Activated CD8-positive, alpha-beta T cell treated with anti-CD3 and anti-CD28 coated beads, Interleukin-2, amount 10 ng/mL, durations not matched to agents 7 days and 5 days (primary cell): ENCODE measurements at regions of chr2 and their contacts with region 1.

Region 1: GRCh38 chr2:18402-19271 is 27.7 kb downstream of the FAM110C start:
- DNase-seq: no peak
- ATAC-seq: no peak
- H3K4me3 Mint-ChIP-seq: no peak overlapping the region
- H3K27ac Mint-ChIP-seq: no peak overlapping the region
- H3K4me1 Mint-ChIP-seq: no peaks in the 10 kb centered on the region
- H3K27me3 Mint-ChIP-seq: peaks cover 20% of the 10 kb centered on the region

Region 2: DNA sequence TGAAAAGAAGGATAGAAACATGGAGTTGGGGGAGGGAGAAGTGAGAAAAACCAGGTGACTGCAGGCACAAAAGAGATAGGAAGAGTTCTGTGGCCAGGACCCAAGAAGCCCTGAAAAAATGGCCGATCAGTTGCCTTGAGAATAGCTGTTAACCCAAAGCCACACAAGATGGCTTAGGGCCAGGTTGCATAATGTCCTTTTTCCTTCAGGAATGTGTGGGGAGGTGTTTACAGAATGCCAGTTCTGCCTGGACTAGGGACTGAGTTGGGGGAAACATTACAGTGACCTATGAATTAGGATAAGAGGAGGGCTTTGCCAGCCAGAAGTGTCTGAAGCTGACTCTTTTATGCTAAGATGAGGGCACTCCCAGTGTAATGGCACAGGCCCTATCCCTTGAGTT is 10.6 kb after region 1 on chr2:
- CTCF ChIA-PET with region 1: interaction called, 23 read pairs
- POLR2A ChIA-PET with region 1: no interaction called
- DNase-seq: no peak
- ATAC-seq: no peak
- H3K4me3 Mint-ChIP-seq: no peak overlapping the region
- H3K27ac Mint-ChIP-seq: peak overlapping the region; percentile 78
- H3K4me1 Mint-ChIP-seq: peaks cover 59% of the 10 kb centered on the region
- H3K27me3 Mint-ChIP-seq: no peaks in the 10 kb centered on the region

Region 3: DNA sequence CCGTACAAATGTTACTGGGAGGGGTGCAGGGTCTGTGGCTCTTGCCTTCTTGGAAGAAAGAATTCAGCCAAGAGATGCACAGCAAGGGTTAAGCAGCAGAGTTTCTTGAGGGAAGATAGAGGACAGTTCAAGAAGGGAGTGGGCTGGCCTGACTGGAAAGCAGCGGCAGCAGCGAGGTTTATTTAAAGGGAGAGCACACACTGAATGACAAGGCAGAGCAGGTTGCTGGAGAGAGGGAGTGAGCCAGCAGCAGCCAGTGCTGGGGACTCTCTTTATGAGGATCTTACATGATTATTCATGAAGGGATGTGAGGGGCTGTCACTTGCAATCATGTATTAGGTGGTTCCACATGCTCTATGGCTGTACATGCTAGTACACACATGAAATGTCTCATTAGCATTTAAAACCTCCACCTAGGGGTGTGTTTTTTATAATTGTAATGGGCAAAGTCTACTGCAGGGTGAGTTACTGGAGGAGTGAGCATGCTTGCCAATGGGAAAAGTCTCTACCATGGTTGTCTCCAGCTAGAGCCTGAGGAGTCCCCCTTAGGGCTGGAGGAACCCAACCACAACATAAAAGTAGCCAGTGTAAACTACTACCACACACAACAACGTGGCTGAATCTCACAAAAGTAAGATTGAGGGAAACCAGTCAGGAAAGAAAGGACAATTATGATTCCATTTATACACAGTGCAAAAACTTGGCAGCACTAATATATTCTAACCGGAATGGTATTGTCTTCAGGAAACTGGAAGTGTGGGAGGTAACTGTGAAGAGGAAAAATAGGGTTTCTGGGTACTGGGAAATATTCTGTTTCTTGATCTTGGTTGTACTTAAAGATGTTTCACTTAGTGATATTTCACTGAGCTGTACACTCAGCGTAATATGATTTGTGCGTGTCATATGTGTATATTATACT is 115.3 kb after region 1 on chr2:
- CTCF ChIA-PET with region 1: no interaction called
- POLR2A ChIA-PET with region 1: no interaction called
- DNase-seq: no peak
- ATAC-seq: no peak
- H3K4me3 Mint-ChIP-seq: no peak overlapping the region
- H3K27ac Mint-ChIP-seq: no peak overlapping the region
- H3K4me1 Mint-ChIP-seq: no peaks in the 10 kb centered on the region
- H3K27me3 Mint-ChIP-seq: peaks cover 9% of the 10 kb centered on the region

Region 4: GRCh38 chr2:424306-425165 is 405.9 kb after region 1 on chr2:
- CTCF ChIA-PET with region 1: no interaction called
- POLR2A ChIA-PET with region 1: no interaction called
- DNase-seq: no peak
- ATAC-seq: no peak
- H3K4me3 Mint-ChIP-seq: no peak overlapping the region
- H3K27ac Mint-ChIP-seq: no peak overlapping the region
- H3K4me1 Mint-ChIP-seq: peaks cover 21% of the 10 kb centered on the region
- H3K27me3 Mint-ChIP-seq: peaks cover 6% of the 10 kb centered on the region